ENCODE measurements at regions of chr5 and their contacts with region 1.

Region 1: DNA sequence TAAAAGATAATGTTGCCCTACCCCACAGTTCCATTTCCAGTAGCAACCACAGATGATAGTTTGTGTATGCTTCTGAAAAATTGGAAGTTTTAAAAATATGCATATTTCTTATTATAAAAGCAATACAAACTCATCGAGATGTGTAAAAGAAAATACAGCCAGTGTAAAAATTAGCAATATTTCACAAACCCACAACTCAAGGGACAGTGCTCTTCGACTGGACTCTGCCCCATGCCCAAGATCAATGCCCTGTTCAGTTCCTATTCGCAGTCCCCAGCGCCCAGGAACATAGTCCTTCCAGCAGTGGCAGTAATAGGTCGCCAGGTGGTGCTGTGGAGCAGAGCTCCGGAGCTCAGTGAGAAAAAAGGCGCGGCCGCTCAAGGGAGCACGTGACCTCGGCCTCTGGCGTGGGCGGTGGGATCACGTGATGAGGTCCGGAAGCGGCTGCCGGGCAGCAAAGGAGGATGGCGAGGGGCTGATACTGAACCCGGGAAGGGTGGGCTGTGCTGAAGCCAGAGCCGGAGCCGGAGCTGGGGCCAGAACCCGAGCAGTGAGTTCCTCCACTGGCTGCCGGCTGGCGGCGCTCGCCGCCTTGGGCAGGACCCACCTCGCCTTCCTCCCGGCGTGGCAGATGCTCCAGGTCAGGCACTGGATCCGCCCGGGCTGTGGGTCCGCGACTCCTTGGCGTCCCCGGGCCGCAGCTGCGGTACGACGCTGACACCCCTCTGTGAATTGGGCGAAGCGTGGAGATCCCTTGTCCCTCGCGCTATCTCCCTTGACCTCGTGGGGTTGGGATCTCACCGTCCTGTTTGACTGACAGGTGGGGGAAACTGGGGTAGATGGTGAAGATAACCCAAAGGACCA is at the start of gene SLC36A1:
- DNase-seq: peak; percentile 96
- ATAC-seq: peak; percentile 98
- total RNA-seq, gene SLC36A1: 4.1 TPM

Region 2: DNA sequence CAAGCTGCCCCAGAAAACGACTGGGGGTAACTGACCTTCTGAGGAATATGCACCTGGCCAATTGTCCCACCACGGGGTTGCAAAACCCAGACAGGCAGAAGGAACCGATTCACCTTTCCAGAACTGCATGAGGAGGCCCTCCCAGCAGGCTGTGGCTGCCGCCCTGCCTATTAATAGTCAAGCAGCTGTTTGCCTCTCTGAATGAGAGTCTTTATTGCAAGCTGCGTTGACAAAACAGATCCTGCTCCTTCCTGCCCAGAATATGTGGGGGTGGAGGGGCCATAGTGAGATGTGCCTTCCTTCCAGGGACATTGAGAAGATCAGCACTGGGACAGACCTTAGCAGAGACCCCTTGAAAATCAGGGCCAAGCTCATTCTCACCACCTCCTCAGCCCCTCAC is 1108.2 kb before region 1 on chr5:
- intact Hi-C with region 1: no loop called
- DNase-seq: no peak
- ATAC-seq: no peak

Region 3: GRCh38 chr5:151523335-151523734 is 75.9 kb after region 1 on chr5:
- intact Hi-C with region 1: no loop called
- DNase-seq: no peak
- ATAC-seq: peak; percentile 40

Region 4: GRCh38 chr5:151628112-151628823 is 180.9 kb after region 1 on chr5:
- intact Hi-C with region 1: no loop called
- DNase-seq: peak; percentile 55
- ATAC-seq: peak; percentile 27

Region 5: GRCh38 chr5:151651997-151652645 is 204.7 kb after region 1 on chr5:
- intact Hi-C with region 1: loop called (anchors 5 kb)
- DNase-seq: peak; percentile 84
- ATAC-seq: peak; percentile 96

Region 6: GRCh38 chr5:151740336-151740942 is 293.0 kb after region 1 on chr5:
- intact Hi-C with region 1: loop called (anchors 10 kb)
- DNase-seq: peak; percentile 76
- ATAC-seq: peak; percentile 90

Measured in left ventricle myocardium superior (tissue), 1 donor.